Heart left ventricle (tissue), 16 donors: ENCODE measurements at regions of chr2 and their contacts with region 1.

Region 1: DNA sequence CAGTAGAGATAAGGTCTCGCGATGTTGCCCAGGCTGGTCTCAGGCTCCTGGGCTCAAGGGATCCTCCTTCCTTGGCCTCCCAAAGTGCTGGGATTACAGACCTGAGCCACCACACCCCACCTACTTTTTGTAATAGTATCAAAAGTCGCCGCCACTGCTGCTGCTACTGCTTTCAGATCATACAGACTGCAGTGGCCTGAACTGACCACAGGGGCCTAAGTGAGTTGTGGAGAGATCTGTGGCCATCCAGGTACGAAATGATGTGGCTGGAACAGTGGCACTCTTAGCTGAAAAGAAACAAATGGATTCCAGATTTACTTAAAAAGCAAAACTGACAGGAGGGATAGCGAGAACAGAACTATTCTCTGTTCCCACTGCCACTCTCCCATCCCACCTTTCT is 32.9 kb upstream of the POMC start:
- DNase-seq: no peak
- ATAC-seq: no peak
- H3K4me3 ChIP-seq: no peak overlapping the region
- H3K27ac ChIP-seq: no peak overlapping the region
- H3K4me1 ChIP-seq: peaks cover 0 to 10% (median 0%) of the 10 kb centered on the region in 12 donors
- H3K27me3 ChIP-seq: no peaks in the 10 kb centered on the region
- CTCF ChIP-seq: peak in 3 of 12 donors; percentile 9 to 23 (median 12)
- POLR2A ChIP-seq: no peak

Region 2: GRCh38 chr2:24409700-24410556 is 791.3 kb before region 1 on chr2:
- intact Hi-C with region 1: loop called in 7 of 10 experiments (anchors 2 to 10 kb)
- DNase-seq: peak in 2 of 5 donors; percentile 20 to 27
- ATAC-seq: peak in 3 of 4 donors; percentile 73 to 89 (median 78)
- H3K4me3 ChIP-seq: no peak overlapping the region
- H3K27ac ChIP-seq: no peak overlapping the region
- H3K4me1 ChIP-seq: no peaks in the 10 kb centered on the region
- H3K27me3 ChIP-seq: peaks cover 0 to 14% (median 0%) of the 10 kb centered on the region in 9 donors
- CTCF ChIP-seq: peak; percentile 74 to 92 (median 82)
- POLR2A ChIP-seq: no peak

Region 3: GRCh38 chr2:24421668-24422067 is 779.6 kb before region 1 on chr2:
- intact Hi-C with region 1: loop called in 3 of 10 experiments (anchors 5 to 10 kb)
- DNase-seq: peak in 4 of 5 donors; percentile 56 to 72 (median 62)
- ATAC-seq: peak; percentile 55 to 85 (median 72)
- H3K4me3 ChIP-seq: no peak overlapping the region
- H3K27ac ChIP-seq: no peak overlapping the region
- H3K4me1 ChIP-seq: peaks cover 0 to 2% (median 0%) of the 10 kb centered on the region in 12 donors
- H3K27me3 ChIP-seq: no peaks in the 10 kb centered on the region
- CTCF ChIP-seq: peak in 11 of 12 donors; percentile 36 to 73 (median 65)
- POLR2A ChIP-seq: no peak

Region 4: DNA sequence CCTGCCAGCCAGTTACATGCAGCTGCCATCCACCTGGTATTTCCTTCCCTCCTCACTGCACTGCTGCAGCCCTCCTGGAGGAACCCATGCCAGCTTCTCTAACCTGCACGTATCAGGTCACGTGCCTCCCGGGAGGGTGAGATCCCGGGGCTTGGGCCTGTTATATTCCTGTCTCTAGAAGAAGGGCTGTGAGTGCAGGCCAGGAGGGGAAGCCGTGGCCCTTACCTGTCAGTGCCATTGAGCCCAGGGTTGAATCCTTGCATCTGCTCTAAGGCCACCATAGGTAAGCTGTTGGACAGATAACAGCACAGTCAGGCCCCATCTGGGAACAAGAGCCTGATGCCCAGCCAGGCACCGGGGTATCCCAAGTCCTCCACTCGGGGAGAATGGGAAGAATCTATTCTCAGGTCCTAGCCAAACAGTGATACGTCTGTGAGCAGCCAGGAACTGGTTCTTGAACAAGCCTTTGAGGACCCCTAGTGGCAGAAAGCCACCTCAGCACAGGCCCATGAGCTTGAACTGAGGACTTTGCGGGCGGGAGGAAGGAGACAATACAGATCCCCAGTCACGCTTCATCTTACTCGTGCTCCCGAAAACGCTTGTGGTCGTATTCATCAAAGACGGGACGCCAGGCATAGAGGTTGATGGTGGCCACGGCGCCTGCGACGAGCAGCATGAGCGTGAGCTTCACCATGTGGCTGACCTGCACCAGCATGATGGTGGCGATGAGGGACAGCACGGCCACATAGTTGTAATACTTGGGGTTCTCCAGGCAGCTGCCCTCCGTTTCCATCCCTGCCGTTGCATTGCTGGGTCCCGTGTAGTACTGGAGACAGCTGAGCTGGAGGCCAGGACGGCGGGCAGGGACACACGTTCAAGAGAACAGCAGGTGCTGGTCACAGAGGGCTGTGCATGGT is 373.7 kb before region 1 on chr2:
- intact Hi-C with region 1: loop called in 1 of 10 experiments (anchors 10 kb)
- DNase-seq: peak in 4 of 5 donors; percentile 72 to 82 (median 79)
- ATAC-seq: peak; percentile 89 to 95 (median 92)
- H3K4me3 ChIP-seq: no peak overlapping the region
- H3K27ac ChIP-seq: no peak overlapping the region
- H3K4me1 ChIP-seq: peaks cover 0 to 16% (median 11%) of the 10 kb centered on the region in 12 donors
- H3K27me3 ChIP-seq: no peaks in the 10 kb centered on the region
- CTCF ChIP-seq: peak; percentile 80 to 95 (median 90)
- POLR2A ChIP-seq: no peak

Region 5: DNA sequence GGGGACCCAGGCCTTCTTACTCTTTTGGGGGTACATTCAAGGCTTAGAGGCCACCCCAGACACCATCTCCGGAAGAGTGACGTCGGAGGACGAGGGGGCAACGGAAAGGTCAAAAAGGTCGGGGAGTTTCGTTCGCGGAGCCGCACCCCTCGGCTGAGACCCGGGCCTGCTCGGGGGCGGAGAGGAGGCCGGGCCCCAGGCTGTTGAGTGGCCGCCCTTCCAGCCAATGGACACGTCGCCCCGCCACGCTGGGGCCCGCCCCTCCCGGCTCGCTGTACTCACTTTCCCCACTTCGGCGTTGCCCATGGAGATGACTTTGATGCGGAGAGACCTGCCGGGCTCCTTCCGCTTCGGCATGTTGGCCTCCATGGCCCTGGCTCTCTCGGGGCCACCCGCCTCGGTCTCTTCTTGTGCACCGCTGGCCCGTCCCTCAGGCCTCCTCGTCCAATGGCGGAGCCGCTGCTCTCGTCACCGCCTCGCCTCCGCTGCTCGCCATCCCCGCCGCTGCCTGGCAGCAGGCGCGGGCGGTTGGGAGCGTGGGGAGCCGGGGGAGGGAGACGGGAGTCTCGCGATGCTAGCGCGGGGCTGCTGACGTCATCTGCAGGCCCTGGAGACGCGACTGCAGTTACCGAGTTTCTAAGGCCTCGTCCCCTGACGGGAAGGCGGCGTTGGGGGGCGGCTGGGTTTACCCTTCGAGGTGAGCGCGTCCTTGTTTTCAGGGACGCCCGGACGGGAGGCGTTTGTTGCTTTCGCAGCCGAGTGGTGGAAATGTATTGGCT is 229.5 kb before region 1 on chr2 and contains the start of gene DNAJC27:
- intact Hi-C with region 1: loop called in 7 of 10 experiments (anchors 1 to 10 kb)
- DNase-seq: peak; percentile 98 to 99 (median 99)
- ATAC-seq: peak; percentile 95 to 97 (median 96)
- H3K4me3 ChIP-seq: peak within 1 kb of the TSS; percentile 70 to 94 (median 82)
- H3K27ac ChIP-seq: peak within 1 kb of the TSS; percentile 95 to 99 (median 98)
- H3K4me1 ChIP-seq: peaks cover 0 to 23% (median 13%) of the 10 kb centered on the region in 12 donors
- H3K27me3 ChIP-seq: no peaks in the 10 kb centered on the region
- CTCF ChIP-seq: no peak
- POLR2A ChIP-seq: peak; percentile 53 to 95
- total RNA-seq, gene DNAJC27: 5.1 to 13.6 (median 9.1) TPM

Region 6: DNA sequence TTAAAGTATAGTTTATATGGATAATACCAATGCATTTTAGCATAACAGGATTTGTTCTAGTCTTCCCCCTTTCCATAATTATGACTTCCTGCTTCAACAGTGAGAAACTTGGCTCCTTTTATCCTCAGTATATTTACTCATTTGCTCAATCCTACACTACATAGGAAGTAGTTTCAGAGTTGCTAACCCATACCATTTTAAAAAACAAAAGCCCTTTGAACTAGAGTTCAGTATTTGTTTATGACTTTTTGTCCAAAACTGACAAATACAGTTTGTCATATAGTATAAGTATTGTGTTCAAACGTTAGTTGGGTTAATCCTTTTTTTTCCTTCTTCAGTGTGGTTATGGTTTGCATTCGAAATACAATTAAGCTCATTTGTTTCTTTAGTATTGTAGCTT is 223.6 kb before region 1 on chr2:
- intact Hi-C with region 1: loop called in 8 of 10 experiments (anchors 1 to 10 kb)
- DNase-seq: no peak
- ATAC-seq: no peak
- H3K4me3 ChIP-seq: no peak overlapping the region
- H3K27ac ChIP-seq: no peak overlapping the region
- H3K4me1 ChIP-seq: peaks cover 0 to 18% (median 6%) of the 10 kb centered on the region in 12 donors
- H3K27me3 ChIP-seq: no peaks in the 10 kb centered on the region
- CTCF ChIP-seq: no peak
- POLR2A ChIP-seq: no peak

Region 7: DNA sequence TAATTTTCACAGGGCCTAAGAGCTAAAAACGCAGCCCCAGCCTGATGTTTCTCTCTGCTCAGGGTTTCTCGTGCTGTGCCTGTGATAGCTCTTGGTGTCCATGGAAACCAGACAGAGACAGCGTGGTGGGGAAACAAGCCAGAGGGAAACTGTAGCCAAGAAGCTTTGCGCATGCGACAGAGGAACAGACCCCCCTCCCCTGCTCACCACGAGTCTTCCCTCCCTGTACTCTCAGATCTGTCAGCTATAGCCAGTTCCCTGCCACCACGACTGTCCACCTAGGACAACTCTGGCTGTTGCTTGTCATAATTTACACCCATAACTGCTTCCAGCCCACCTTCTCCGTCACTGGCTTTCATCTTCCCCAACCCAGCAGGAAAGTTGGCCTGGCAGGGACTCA is 216.4 kb before region 1 on chr2:
- intact Hi-C with region 1: loop called in 1 of 10 experiments (anchors 5 kb)
- DNase-seq: peak in 4 of 5 donors; percentile 61 to 80 (median 74)
- ATAC-seq: peak; percentile 74 to 95 (median 94)
- H3K4me3 ChIP-seq: no peak overlapping the region
- H3K27ac ChIP-seq: peak overlapping the region; percentile 14 to 76 (median 62)
- H3K4me1 ChIP-seq: peaks cover 0 to 27% (median 18%) of the 10 kb centered on the region in 12 donors
- H3K27me3 ChIP-seq: no peaks in the 10 kb centered on the region
- CTCF ChIP-seq: no peak
- POLR2A ChIP-seq: no peak

Region 8: DNA sequence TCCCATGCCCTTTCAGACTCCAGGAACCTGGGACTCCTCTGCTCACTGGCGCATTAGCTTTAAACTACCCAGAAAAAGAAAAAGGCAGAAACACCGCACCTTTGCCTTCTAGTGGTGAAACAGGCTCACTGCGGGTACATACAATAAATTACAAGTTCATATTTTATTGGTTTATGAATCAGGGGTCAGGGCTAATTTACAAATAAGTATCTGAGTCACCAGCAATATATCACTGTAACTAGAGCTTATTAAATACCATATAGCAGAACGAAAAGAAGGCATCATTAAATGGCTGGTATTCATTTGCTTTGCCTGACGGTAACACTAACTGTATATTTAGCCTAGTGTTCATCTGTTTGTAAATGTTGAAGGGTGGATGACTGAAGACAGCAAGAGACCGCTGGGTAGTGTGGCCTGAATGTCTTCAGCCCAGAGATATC is 499.0 kb after region 1 on chr2:
- intact Hi-C with region 1: no loop called
- DNase-seq: no peak
- ATAC-seq: no peak
- H3K4me3 ChIP-seq: no peak overlapping the region
- H3K27ac ChIP-seq: no peak overlapping the region
- H3K4me1 ChIP-seq: no peaks in the 10 kb centered on the region
- H3K27me3 ChIP-seq: no peaks in the 10 kb centered on the region
- CTCF ChIP-seq: peak; percentile 50 to 74 (median 63)
- POLR2A ChIP-seq: no peak